CD4-positive, alpha-beta memory T cell (primary cell): ENCODE measurements at regions of chr3 and their contacts with region 1.

Region 1: GRCh38 chr3:8301728-8302462 is 199.7 kb upstream of the LMCD1 start:
- DNase-seq: peak in 4 of 5 donors; percentile 33 to 50 (median 37)
- H3K4me3 ChIP-seq: no peak overlapping the region
- H3K4me3 Mint-ChIP-seq: no peak overlapping the region
- H3K27ac ChIP-seq: no peak overlapping the region
- H3K27ac Mint-ChIP-seq: peak overlapping the region in 3 of 7 donors; percentile 19 to 68 (median 67)
- H3K4me1 ChIP-seq: no peaks in the 10 kb centered on the region
- H3K4me1 Mint-ChIP-seq: peaks cover 4 to 9% (median 7%) of the 10 kb centered on the region in 4 donors
- H3K27me3 ChIP-seq: no peaks in the 10 kb centered on the region
- H3K27me3 Mint-ChIP-seq: peaks cover 1 to 4% of the 10 kb centered on the region in 2 donors

Region 2: GRCh38 chr3:7062714-7063113 is 1239.2 kb before region 1 on chr3:
- CTCF ChIA-PET with region 1: no interaction called
- POLR2A ChIA-PET with region 1: no interaction called
- intact Hi-C with region 1: no loop called
- DNase-seq: no peak
- H3K4me3 ChIP-seq: no peak overlapping the region
- H3K4me3 Mint-ChIP-seq: no peak overlapping the region
- H3K27ac ChIP-seq: no peak overlapping the region
- H3K27ac Mint-ChIP-seq: no peak overlapping the region
- H3K4me1 ChIP-seq: no peaks in the 10 kb centered on the region
- H3K4me1 Mint-ChIP-seq: no peaks in the 10 kb centered on the region
- H3K27me3 ChIP-seq: no peaks in the 10 kb centered on the region
- H3K27me3 Mint-ChIP-seq: no peaks in the 10 kb centered on the region

Region 3: GRCh38 chr3:7800006-7800780 is 501.7 kb before region 1 on chr3:
- CTCF ChIA-PET with region 1: no interaction called
- POLR2A ChIA-PET with region 1: no interaction called
- intact Hi-C with region 1: loop called (anchors 10 kb)
- DNase-seq: peak in 4 of 5 donors; percentile 16 to 34 (median 20)
- H3K4me3 ChIP-seq: no peak overlapping the region
- H3K4me3 Mint-ChIP-seq: no peak overlapping the region
- H3K27ac ChIP-seq: no peak overlapping the region
- H3K27ac Mint-ChIP-seq: no peak overlapping the region
- H3K4me1 ChIP-seq: no peaks in the 10 kb centered on the region
- H3K4me1 Mint-ChIP-seq: peaks cover 0 to 2% (median 0%) of the 10 kb centered on the region in 4 donors
- H3K27me3 ChIP-seq: no peaks in the 10 kb centered on the region
- H3K27me3 Mint-ChIP-seq: no peaks in the 10 kb centered on the region

Region 4: DNA sequence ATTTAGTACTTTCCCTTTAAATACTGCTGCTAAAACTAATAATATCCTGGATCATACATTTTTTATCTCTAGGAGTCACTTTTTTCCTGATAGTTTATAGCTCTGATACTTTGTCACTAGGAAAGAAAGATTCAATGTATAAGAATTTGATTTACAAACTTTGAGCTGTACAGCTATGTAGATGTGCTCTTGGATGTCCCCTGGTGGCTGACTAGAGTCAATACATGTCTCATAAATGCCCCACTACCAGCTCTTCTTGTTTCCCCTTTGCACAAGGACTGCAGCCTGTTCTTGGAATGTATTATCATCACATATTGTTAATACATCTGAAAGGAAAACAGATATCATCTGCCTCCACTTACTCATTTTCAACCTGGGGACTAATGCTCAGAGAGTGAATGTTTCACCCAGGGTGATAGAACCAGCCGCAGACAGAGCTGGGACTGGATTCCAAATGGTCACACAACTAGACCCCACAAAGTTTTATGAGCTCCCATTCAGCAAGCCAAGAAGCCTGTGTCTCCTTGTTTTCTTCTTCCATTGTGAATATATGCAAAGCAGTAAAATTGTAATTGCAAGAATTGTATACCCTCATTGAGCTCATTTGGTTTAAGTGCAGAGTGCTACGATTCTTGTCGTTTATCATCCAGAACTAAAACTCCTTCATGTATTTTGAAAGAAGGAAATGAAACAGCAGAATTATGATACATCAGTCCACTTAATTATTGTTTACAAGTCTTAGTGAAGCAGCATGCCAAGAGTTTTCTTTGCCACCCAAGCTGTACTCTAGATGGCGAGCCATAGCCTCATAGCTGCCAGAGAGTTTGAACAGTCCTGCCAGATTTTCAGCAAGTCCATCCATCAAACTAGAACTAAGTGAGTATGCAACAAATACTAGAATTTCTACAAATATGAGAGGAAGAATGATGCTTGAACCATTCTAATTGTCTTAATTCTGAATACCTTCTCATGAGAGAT is 61.9 kb before region 1 on chr3:
- CTCF ChIA-PET with region 1: interaction called, 14 read pairs
- POLR2A ChIA-PET with region 1: no interaction called
- intact Hi-C with region 1: no loop called
- DNase-seq: peak in 4 of 5 donors; percentile 6 to 22 (median 18)
- H3K4me3 ChIP-seq: no peak overlapping the region
- H3K4me3 Mint-ChIP-seq: no peak overlapping the region
- H3K27ac ChIP-seq: no peak overlapping the region
- H3K27ac Mint-ChIP-seq: peak overlapping the region in 1 of 7 donors; percentile 50
- H3K4me1 ChIP-seq: no peaks in the 10 kb centered on the region
- H3K4me1 Mint-ChIP-seq: no peaks in the 10 kb centered on the region
- H3K27me3 ChIP-seq: no peaks in the 10 kb centered on the region
- H3K27me3 Mint-ChIP-seq: peaks cover 0 to 2% of the 10 kb centered on the region in 2 donors

Region 5: DNA sequence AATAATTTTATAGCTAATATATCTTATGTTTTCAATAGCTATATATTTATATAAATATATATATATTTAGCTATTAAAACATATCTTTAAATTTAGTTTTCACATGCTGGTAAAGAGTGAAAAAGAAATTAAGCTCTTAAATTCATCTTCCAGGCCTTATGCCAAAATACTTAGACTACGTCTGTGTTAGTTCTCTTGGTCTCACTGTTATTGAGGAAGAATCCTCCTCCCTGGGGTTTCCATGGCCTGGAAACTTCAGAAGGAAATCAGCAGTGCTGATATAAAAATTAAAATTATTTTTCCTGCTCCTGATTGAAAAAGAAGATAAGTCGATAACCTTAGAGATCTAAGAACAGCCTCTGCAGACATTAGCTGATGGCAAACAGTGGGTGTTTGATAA is 25.4 kb before region 1 on chr3:
- CTCF ChIA-PET with region 1: interaction called, 10 read pairs
- POLR2A ChIA-PET with region 1: no interaction called
- intact Hi-C with region 1: no loop called
- DNase-seq: no peak
- H3K4me3 ChIP-seq: no peak overlapping the region
- H3K4me3 Mint-ChIP-seq: no peak overlapping the region
- H3K27ac ChIP-seq: no peak overlapping the region
- H3K27ac Mint-ChIP-seq: no peak overlapping the region
- H3K4me1 ChIP-seq: no peaks in the 10 kb centered on the region
- H3K4me1 Mint-ChIP-seq: no peaks in the 10 kb centered on the region
- H3K27me3 ChIP-seq: no peaks in the 10 kb centered on the region
- H3K27me3 Mint-ChIP-seq: no peaks in the 10 kb centered on the region

Region 6: GRCh38 chr3:8290611-8291010 is 11.3 kb before region 1 on chr3:
- CTCF ChIA-PET with region 1: interaction called, 41 read pairs
- POLR2A ChIA-PET with region 1: no interaction called
- intact Hi-C with region 1: no loop called
- DNase-seq: no peak
- H3K4me3 ChIP-seq: no peak overlapping the region
- H3K4me3 Mint-ChIP-seq: no peak overlapping the region
- H3K27ac ChIP-seq: no peak overlapping the region
- H3K27ac Mint-ChIP-seq: no peak overlapping the region
- H3K4me1 ChIP-seq: no peaks in the 10 kb centered on the region
- H3K4me1 Mint-ChIP-seq: no peaks in the 10 kb centered on the region
- H3K27me3 ChIP-seq: no peaks in the 10 kb centered on the region
- H3K27me3 Mint-ChIP-seq: peaks cover 0 to 2% of the 10 kb centered on the region in 2 donors

Region 7: GRCh38 chr3:8324740-8325139 is 22.8 kb after region 1 on chr3:
- CTCF ChIA-PET with region 1: interaction called, 13 read pairs
- POLR2A ChIA-PET with region 1: interaction called, 5 read pairs
- intact Hi-C with region 1: no loop called
- DNase-seq: peak; percentile 50 to 65 (median 60)
- H3K4me3 ChIP-seq: no peak overlapping the region
- H3K4me3 Mint-ChIP-seq: no peak overlapping the region
- H3K27ac ChIP-seq: no peak overlapping the region
- H3K27ac Mint-ChIP-seq: peak overlapping the region in 3 of 7 donors; percentile 34 to 52 (median 43)
- H3K4me1 ChIP-seq: peaks cover 10% of the 10 kb centered on the region
- H3K4me1 Mint-ChIP-seq: peaks cover 21 to 24% (median 22%) of the 10 kb centered on the region in 4 donors
- H3K27me3 ChIP-seq: no peaks in the 10 kb centered on the region
- H3K27me3 Mint-ChIP-seq: no peaks in the 10 kb centered on the region